GM12878 (cell line): ENCODE measurements at regions of chr9 and their contacts with region 1.

Region 1: DNA sequence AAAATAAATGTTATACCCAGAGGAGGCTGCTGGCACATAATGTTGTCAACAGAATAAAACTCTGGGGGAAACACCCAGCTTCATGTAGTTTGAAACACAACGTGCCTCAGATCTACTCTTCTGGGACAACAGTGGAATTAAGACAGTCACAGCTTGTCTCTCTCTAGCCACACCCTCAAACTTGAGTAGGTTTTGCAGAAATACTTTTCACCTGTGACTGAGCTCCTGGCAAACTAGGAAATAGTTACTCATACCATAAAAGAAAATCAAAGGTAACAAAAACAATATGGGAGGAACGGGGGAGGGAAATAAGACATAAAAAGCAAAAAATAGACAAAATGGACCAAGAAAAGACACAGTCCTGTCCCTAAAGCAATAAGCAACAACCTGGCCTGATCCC is 14.4 kb downstream of the ELAVL2 start:
- DNase-seq: no peak
- ATAC-seq: 0 out of 3 replicates have a peak, but pooled peaks have one; percentile 17
- H3K4me3 ChIP-seq: no peak overlapping the region
- H3K27ac ChIP-seq: no peak overlapping the region
- H3K4me1 ChIP-seq: no peaks in the 10 kb centered on the region
- H3K27me3 ChIP-seq: no peaks in the 10 kb centered on the region
- CTCF ChIP-seq: no peak
- EP300 ChIP-seq: no peak
- POLR2A ChIP-seq: no peak
- RAD21 ChIP-seq: no peak

Region 2: GRCh38 chr9:23702311-23702922 is 109.2 kb before region 1 on chr9:
- CTCF ChIA-PET with region 1: no interaction called
- POLR2A ChIA-PET with region 1: no interaction called
- RAD21 ChIA-PET with region 1: no interaction called
- SMC1A ChIA-PET with region 1: no interaction called
- in situ Hi-C with region 1: no loop called
- intact Hi-C with region 1: no loop called
- DNase-seq: no peak
- ATAC-seq: no peak
- H3K4me3 ChIP-seq: no peak overlapping the region
- H3K27ac ChIP-seq: no peak overlapping the region
- H3K4me1 ChIP-seq: no peaks in the 10 kb centered on the region
- H3K27me3 ChIP-seq: no peaks in the 10 kb centered on the region
- CTCF ChIP-seq: no peak; a peak in 1 of 6 replicates
- EP300 ChIP-seq: no peak
- POLR2A ChIP-seq: no peak
- RAD21 ChIP-seq: no peak

Region 3: GRCh38 chr9:23739753-23740152 is 71.9 kb before region 1 on chr9:
- CTCF ChIA-PET with region 1: no interaction called
- POLR2A ChIA-PET with region 1: no interaction called
- RAD21 ChIA-PET with region 1: no interaction called
- SMC1A ChIA-PET with region 1: interaction called, 6 read pairs
- in situ Hi-C with region 1: no loop called
- intact Hi-C with region 1: loop called (anchors 5 kb)
- DNase-seq: no peak
- ATAC-seq: no peak
- H3K4me3 ChIP-seq: no peak overlapping the region
- H3K27ac ChIP-seq: no peak overlapping the region
- H3K4me1 ChIP-seq: no peaks in the 10 kb centered on the region
- H3K27me3 ChIP-seq: no peaks in the 10 kb centered on the region
- CTCF ChIP-seq: no peak
- EP300 ChIP-seq: no peak
- POLR2A ChIP-seq: no peak
- RAD21 ChIP-seq: no peak

Region 4: GRCh38 chr9:23769307-23769935 is 42.2 kb before region 1 on chr9:
- CTCF ChIA-PET with region 1: interaction called, 6 read pairs
- POLR2A ChIA-PET with region 1: no interaction called
- RAD21 ChIA-PET with region 1: interaction called, 3 read pairs
- SMC1A ChIA-PET with region 1: interaction called, 11 read pairs
- in situ Hi-C with region 1: no loop called
- intact Hi-C with region 1: no loop called
- DNase-seq: no peak
- ATAC-seq: peak; percentile 58
- H3K4me3 ChIP-seq: no peak overlapping the region
- H3K27ac ChIP-seq: no peak overlapping the region
- H3K4me1 ChIP-seq: no peaks in the 10 kb centered on the region
- H3K27me3 ChIP-seq: no peaks in the 10 kb centered on the region
- CTCF ChIP-seq: no peak
- EP300 ChIP-seq: no peak
- POLR2A ChIP-seq: no peak
- RAD21 ChIP-seq: no peak

Region 5: GRCh38 chr9:23790351-23791260 is 21.0 kb before region 1 on chr9:
- CTCF ChIA-PET with region 1: interaction called, 3 read pairs
- POLR2A ChIA-PET with region 1: interaction called, 6 read pairs
- RAD21 ChIA-PET with region 1: interaction called, 4 read pairs
- SMC1A ChIA-PET with region 1: interaction called, 13 read pairs
- in situ Hi-C with region 1: no loop called
- intact Hi-C with region 1: no loop called
- DNase-seq: no peak
- ATAC-seq: no peak; the same call in 2 of the 3 replicates
- H3K4me3 ChIP-seq: no peak overlapping the region
- H3K27ac ChIP-seq: no peak overlapping the region
- H3K4me1 ChIP-seq: no peaks in the 10 kb centered on the region
- H3K27me3 ChIP-seq: no peaks in the 10 kb centered on the region
- CTCF ChIP-seq: no peak
- EP300 ChIP-seq: no peak
- POLR2A ChIP-seq: no peak
- RAD21 ChIP-seq: no peak